CD8-positive, alpha-beta T cell (primary cell): ENCODE measurements at regions of chr15 and their contacts with region 1.

Region 1: GRCh38 chr15:90954712-90955671 is at the start of gene RCCD1:
- DNase-seq: peak; percentile 63 to 94 (median 87)
- ATAC-seq: peak; percentile 94
- H3K4me3 ChIP-seq: peak within 1 kb of the TSS; percentile 87 to 97
- H3K4me3 Mint-ChIP-seq: peak within 1 kb of the TSS; percentile 87
- H3K27ac ChIP-seq: peak within 1 kb of the TSS; percentile 90 to 97
- H3K27ac Mint-ChIP-seq: peak within 1 kb of the TSS; percentile 92
- H3K4me1 ChIP-seq: peaks cover 16% of the 10 kb centered on the region
- H3K4me1 Mint-ChIP-seq: peaks cover 10% of the 10 kb centered on the region
- H3K27me3 ChIP-seq: no peaks in the 10 kb centered on the region
- H3K27me3 Mint-ChIP-seq: no peaks in the 10 kb centered on the region
- CTCF ChIP-seq: no peak
- total RNA-seq, gene RCCD1: 3.9 to 4.1 TPM

Region 2: DNA sequence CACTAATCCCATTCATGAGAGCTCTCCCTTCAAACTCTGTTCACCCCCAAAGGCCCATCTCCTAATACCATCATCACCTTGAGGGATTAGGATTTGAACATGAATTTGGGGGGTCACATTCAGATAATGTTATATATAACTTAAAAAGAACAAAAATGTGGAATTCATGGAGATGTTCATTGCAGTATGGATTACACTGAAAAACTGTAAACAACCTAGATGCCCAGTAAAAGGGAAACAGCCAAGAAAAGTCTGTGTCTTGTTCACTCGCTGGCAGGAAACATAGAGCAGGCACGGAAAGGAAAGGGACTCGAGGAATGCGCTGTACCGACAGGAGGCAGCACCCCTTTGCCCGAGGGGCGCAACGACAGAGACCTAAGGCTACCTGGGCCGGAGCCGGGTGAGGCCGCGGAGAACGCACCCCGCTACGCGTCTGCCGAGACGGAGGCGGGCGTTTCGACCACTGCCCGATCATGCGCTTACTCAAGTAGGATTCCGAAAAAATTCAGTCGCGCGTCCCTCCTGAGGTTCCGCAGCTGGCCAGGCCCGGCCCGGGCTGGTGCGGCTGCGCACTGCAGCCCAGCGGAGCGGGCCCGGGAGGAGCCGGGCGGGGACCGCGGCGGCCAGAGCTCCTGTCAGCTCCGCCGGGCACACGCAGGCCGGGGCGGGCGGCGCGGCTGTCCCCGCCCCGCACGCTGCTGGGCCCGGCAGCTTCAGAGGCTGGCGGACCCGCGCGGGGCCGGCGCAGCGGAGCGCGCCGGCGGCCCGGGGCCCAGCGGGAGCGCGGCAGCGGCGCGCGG is 52.8 kb before region 1 on chr15:
- CTCF ChIA-PET with region 1: no interaction called
- POLR2A ChIA-PET with region 1: interaction called, 4 read pairs
- intact Hi-C with region 1: loop called in 1 of 2 experiments (anchors 1 kb)
- DNase-seq: peak; percentile 42 to 88 (median 70)
- ATAC-seq: peak; percentile 69
- H3K4me3 ChIP-seq: peak overlapping the region; percentile 65 to 89
- H3K4me3 Mint-ChIP-seq: peak overlapping the region; percentile 92
- H3K27ac ChIP-seq: peak overlapping the region; percentile 65 to 73
- H3K27ac Mint-ChIP-seq: peak overlapping the region; percentile 93
- H3K4me1 ChIP-seq: peaks cover 15% of the 10 kb centered on the region
- H3K4me1 Mint-ChIP-seq: peaks cover 28% of the 10 kb centered on the region
- H3K27me3 ChIP-seq: no peaks in the 10 kb centered on the region
- H3K27me3 Mint-ChIP-seq: no peaks in the 10 kb centered on the region
- CTCF ChIP-seq: peak; percentile 84

Region 3: DNA sequence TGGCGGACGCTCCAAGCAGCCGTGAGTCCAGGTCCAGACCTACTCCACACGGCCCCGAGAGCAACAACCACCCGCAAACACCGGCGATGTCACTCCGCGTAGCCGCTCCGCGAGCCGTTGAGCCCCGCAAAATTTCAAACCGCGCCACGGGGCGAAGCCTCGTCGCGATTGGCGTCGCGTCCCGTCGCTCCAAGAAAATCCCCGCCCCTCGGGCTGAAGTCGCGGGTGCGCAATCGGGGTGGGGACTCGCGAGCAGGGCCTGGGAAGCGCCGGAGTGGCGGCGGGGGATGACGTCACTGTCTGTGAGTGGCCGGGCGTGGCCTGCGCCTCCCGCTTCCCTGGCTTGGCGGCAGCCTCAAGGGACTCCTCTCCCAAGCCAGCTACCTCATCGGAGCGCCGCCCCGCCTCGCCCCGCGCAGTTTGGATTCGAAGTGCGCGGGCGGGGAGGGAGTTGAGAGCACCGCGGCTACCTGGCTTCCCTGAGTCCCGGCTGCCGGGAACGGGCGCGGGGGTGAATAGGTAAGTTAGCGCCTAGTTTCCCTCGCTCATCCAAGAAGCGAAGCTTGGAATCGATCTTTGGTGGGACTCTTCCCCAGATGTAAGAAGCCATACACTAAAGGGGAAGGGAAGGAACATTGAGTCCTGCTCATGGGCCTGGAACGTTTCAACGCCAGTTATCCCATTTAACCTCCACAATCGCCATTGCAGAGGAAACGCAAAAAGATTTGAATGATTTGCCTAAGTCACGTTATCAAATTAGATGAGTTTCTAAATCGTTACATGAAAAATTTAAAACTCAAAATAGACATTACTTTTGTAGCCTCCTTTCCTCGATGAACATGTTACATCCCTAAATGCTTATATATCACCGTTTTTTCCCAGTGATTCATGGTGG is 39.7 kb after region 1 on chr15 and contains the start of gene PRC1:
- CTCF ChIA-PET with region 1: interaction called, 3 read pairs
- POLR2A ChIA-PET with region 1: no interaction called
- intact Hi-C with region 1: loop called (anchors 1 kb)
- DNase-seq: peak; percentile 92 to 99 (median 97)
- ATAC-seq: peak; percentile 96
- H3K4me3 ChIP-seq: peak within 1 kb of the TSS; percentile 78 to 95
- H3K4me3 Mint-ChIP-seq: peak within 1 kb of the TSS; percentile 99
- H3K27ac ChIP-seq: peak within 1 kb of the TSS; percentile 81 to 94
- H3K27ac Mint-ChIP-seq: peak within 1 kb of the TSS; percentile 97
- H3K4me1 ChIP-seq: peaks cover 13% of the 10 kb centered on the region
- H3K4me1 Mint-ChIP-seq: peaks cover 19% of the 10 kb centered on the region
- H3K27me3 ChIP-seq: no peaks in the 10 kb centered on the region
- H3K27me3 Mint-ChIP-seq: no peaks in the 10 kb centered on the region
- CTCF ChIP-seq: no peak
- total RNA-seq, gene PRC1: 24.6 to 31.3 TPM

Region 4: GRCh38 chr15:91032919-91033803 is 78.2 kb after region 1 on chr15:
- CTCF ChIA-PET with region 1: interaction called, 35 read pairs
- POLR2A ChIA-PET with region 1: interaction called, 3 read pairs
- intact Hi-C with region 1: no loop called
- DNase-seq: peak; percentile 25 to 69 (median 59)
- ATAC-seq: peak; percentile 80
- H3K4me3 ChIP-seq: no peak overlapping the region
- H3K4me3 Mint-ChIP-seq: no peak overlapping the region
- H3K27ac ChIP-seq: no peak overlapping the region
- H3K27ac Mint-ChIP-seq: no peak overlapping the region
- H3K4me1 ChIP-seq: no peaks in the 10 kb centered on the region
- H3K4me1 Mint-ChIP-seq: peaks cover 2% of the 10 kb centered on the region
- H3K27me3 ChIP-seq: no peaks in the 10 kb centered on the region
- H3K27me3 Mint-ChIP-seq: no peaks in the 10 kb centered on the region
- CTCF ChIP-seq: peak; percentile 59

Region 5: GRCh38 chr15:91271565-91272153 is 316.7 kb after region 1 on chr15:
- CTCF ChIA-PET with region 1: interaction called, 11 read pairs
- POLR2A ChIA-PET with region 1: no interaction called
- intact Hi-C with region 1: loop called in 1 of 2 experiments (anchors 1 kb)
- DNase-seq: peak; percentile 24 to 80 (median 60)
- ATAC-seq: peak; percentile 42
- H3K4me3 ChIP-seq: no peak overlapping the region
- H3K4me3 Mint-ChIP-seq: no peak overlapping the region
- H3K27ac ChIP-seq: no peak overlapping the region
- H3K27ac Mint-ChIP-seq: no peak overlapping the region
- H3K4me1 ChIP-seq: no peaks in the 10 kb centered on the region
- H3K4me1 Mint-ChIP-seq: peaks cover 5% of the 10 kb centered on the region
- H3K27me3 ChIP-seq: peaks cover 0 to 3% of the 10 kb centered on the region in 2 experiments
- H3K27me3 Mint-ChIP-seq: peaks cover 22% of the 10 kb centered on the region
- CTCF ChIP-seq: peak; percentile 74

Region 6: GRCh38 chr15:91357011-91357410 is 402.0 kb after region 1 on chr15:
- CTCF ChIA-PET with region 1: no interaction called
- POLR2A ChIA-PET with region 1: no interaction called
- intact Hi-C with region 1: no loop called
- DNase-seq: no peak
- ATAC-seq: no peak
- H3K4me3 ChIP-seq: no peak overlapping the region
- H3K4me3 Mint-ChIP-seq: no peak overlapping the region
- H3K27ac ChIP-seq: no peak overlapping the region
- H3K27ac Mint-ChIP-seq: no peak overlapping the region
- H3K4me1 ChIP-seq: no peaks in the 10 kb centered on the region
- H3K4me1 Mint-ChIP-seq: no peaks in the 10 kb centered on the region
- H3K27me3 ChIP-seq: no peaks in the 10 kb centered on the region
- H3K27me3 Mint-ChIP-seq: no peaks in the 10 kb centered on the region
- CTCF ChIP-seq: no peak